Activated CD4-positive, alpha-beta T cell treated with anti-CD3 and anti-CD28 coated beads for 36 hours (primary cell): ENCODE measurements at regions of chr1 and their contacts with region 1.

Region 1: DNA sequence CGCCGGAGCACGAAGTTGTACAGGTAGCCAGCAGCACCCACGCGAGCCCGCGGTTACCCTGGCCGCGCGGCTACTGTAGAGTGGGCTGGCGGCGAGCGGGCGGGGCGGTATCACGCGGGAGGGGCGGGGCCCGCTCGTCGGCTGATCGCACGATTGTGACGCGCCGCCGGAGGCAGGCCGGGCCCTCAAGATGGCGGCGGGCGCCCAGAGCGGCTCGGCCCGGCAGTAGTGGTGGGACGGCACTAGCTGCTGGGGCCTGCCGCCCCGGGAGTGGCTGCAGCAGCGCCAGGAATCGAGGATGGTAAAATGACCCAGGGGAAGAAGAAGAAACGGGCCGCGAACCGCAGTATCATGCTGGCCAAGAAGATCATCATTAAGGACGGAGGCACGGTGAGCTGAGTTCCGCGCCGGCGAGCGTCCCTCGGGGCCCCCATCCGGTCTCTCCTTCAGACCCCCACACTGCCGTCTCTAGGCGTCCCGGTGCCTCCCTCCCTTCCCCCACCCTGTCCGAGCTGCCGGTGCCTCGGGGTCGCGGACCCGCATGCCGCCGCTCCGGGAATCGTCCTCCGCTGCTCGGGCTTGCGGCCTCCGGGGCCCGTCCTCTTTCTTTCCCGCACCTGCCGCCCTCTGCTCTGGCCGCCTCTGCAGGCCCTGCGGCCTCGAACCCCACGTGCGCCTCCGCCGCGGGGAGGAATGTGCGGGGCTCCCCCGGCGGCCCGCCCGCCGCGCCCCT is 68.3 kb downstream of the SLC35A3 start:
- DNase-seq: peak; percentile 95
- ATAC-seq: peak; percentile 80
- H3K4me3 Mint-ChIP-seq: peak overlapping the region; percentile 95
- H3K27ac Mint-ChIP-seq: peak overlapping the region; percentile 98
- H3K4me1 Mint-ChIP-seq: peaks cover 51% of the 10 kb centered on the region
- H3K27me3 Mint-ChIP-seq: no peaks in the 10 kb centered on the region

Region 2: DNA sequence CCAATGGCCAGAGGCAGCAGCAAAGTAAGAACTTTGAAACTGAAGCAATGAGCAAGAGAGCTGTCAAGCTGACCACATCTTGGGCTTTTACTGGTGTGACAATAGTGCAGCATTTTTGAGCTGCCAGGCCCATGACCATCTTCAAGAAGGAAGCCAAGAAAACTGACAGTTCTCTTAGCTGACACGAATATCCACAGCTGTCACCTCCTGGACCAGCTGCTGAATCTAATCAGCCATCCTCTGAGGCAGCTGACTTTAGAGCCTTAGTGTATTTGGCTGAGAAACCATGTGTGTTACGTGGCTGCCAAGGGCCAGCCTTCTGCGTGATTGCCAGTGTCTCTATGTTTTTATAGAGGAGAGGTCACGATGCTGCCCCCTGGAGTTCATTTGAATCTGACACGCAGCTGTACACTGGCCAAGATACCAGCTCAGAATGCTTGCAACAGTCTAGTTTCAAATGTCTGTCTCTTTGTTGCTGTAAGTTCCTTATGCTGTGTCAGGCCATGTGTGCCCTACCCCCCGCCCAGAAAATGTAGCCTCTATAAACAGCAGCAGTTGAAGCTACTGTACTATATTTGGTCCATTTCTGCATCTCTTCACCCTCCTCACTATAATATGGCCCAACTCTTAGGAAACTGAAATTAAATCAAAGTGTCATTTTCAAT is 352.4 kb before region 1 on chr1:
- CTCF ChIA-PET with region 1: no interaction called
- POLR2A ChIA-PET with region 1: no interaction called
- intact Hi-C with region 1: no loop called
- DNase-seq: peak; percentile 67
- ATAC-seq: peak; percentile 73
- H3K4me3 Mint-ChIP-seq: no peak overlapping the region
- H3K27ac Mint-ChIP-seq: no peak overlapping the region
- H3K4me1 Mint-ChIP-seq: no peaks in the 10 kb centered on the region
- H3K27me3 Mint-ChIP-seq: peaks cover 6% of the 10 kb centered on the region

Region 3: GRCh38 chr1:99808391-99809115 is 229.5 kb before region 1 on chr1:
- CTCF ChIA-PET with region 1: interaction called, 3 read pairs
- POLR2A ChIA-PET with region 1: no interaction called
- intact Hi-C with region 1: loop called (anchors 1 kb)
- DNase-seq: peak; percentile 47
- ATAC-seq: peak; percentile 93
- H3K4me3 Mint-ChIP-seq: no peak overlapping the region
- H3K27ac Mint-ChIP-seq: peak overlapping the region; percentile 75
- H3K4me1 Mint-ChIP-seq: peaks cover 11% of the 10 kb centered on the region
- H3K27me3 Mint-ChIP-seq: peaks cover 9% of the 10 kb centered on the region

Region 4: GRCh38 chr1:99969729-99970621 is 68.1 kb before region 1 on chr1 and contains the start of gene SLC35A3:
- CTCF ChIA-PET with region 1: interaction called, 3 read pairs
- POLR2A ChIA-PET with region 1: interaction called, 10 read pairs
- intact Hi-C with region 1: loop called (anchors 1 kb)
- DNase-seq: peak; percentile 89
- ATAC-seq: peak; percentile 89
- H3K4me3 Mint-ChIP-seq: peak within 1 kb of the TSS; percentile 100
- H3K27ac Mint-ChIP-seq: peak within 1 kb of the TSS; percentile 94
- H3K4me1 Mint-ChIP-seq: peaks cover 26% of the 10 kb centered on the region
- H3K27me3 Mint-ChIP-seq: no peaks in the 10 kb centered on the region
- total RNA-seq, gene SLC35A3: 11.2 to 13.4 TPM

Region 5: GRCh38 chr1:100107696-100108095 is 69.6 kb after region 1 on chr1:
- CTCF ChIA-PET with region 1: no interaction called
- POLR2A ChIA-PET with region 1: no interaction called
- intact Hi-C with region 1: no loop called
- DNase-seq: no peak
- ATAC-seq: no peak
- H3K4me3 Mint-ChIP-seq: no peak overlapping the region
- H3K27ac Mint-ChIP-seq: no peak overlapping the region
- H3K4me1 Mint-ChIP-seq: peaks cover 4% of the 10 kb centered on the region
- H3K27me3 Mint-ChIP-seq: no peaks in the 10 kb centered on the region

Region 6: DNA sequence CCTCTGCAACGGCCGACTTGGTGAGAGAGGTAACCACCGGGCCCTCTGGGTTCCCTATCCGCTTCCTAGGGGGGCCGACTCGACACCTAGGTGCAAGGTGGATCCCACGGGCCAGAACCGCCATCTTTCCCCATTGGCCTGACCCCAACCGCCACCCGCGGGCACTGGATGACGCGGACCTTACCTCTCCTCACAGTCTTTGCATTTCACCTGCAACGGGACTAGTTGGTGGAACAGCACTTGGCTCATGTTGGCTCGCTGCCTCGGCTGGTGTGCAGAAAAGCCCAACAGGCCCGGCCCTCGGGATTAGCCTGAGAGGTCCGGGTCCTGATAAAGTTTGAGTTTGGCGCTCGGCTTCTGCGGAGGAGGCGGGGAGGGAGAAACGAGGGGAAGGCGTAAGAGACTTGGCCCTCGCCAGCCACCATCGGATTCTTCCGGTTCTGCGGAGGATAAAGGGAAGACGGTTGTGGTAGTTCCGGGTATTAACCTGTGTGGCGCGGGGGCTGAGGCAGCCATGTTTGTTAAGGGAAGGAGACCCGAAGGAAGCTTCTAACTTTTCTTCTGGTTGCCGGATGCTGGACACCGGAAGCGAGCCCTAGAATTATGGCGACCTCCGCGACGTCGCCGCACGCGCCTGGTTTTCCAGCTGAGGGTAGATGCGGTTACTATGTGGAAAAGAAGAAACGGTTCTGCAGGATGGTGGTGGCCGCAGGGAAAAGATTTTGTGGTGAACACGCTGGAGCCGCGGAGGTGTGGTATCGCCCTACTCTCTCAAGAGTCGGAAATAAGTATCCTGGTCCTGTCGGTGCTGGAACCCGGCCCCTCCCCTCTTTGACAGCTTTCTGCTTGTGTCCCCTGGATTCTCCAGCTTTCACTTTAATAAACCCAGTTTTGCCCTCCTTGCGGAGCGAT is 94.7 kb after region 1 on chr1 and contains the starts of genes SASS6 and TRMT13:
- CTCF ChIA-PET with region 1: no interaction called
- POLR2A ChIA-PET with region 1: interaction called, 5 read pairs
- intact Hi-C with region 1: loop called (anchors 1 kb)
- DNase-seq: peak; percentile 97
- ATAC-seq: peak; percentile 94
- H3K4me3 Mint-ChIP-seq: peak within 1 kb of the TSS; percentile 98
- H3K27ac Mint-ChIP-seq: peak within 1 kb of the TSS; percentile 98
- H3K4me1 Mint-ChIP-seq: peaks cover 32% of the 10 kb centered on the region
- H3K27me3 Mint-ChIP-seq: no peaks in the 10 kb centered on the region
- total RNA-seq, gene SASS6: 14.2 to 17.4 TPM
- total RNA-seq, gene TRMT13: 19.0 to 20.2 TPM

Region 7: DNA sequence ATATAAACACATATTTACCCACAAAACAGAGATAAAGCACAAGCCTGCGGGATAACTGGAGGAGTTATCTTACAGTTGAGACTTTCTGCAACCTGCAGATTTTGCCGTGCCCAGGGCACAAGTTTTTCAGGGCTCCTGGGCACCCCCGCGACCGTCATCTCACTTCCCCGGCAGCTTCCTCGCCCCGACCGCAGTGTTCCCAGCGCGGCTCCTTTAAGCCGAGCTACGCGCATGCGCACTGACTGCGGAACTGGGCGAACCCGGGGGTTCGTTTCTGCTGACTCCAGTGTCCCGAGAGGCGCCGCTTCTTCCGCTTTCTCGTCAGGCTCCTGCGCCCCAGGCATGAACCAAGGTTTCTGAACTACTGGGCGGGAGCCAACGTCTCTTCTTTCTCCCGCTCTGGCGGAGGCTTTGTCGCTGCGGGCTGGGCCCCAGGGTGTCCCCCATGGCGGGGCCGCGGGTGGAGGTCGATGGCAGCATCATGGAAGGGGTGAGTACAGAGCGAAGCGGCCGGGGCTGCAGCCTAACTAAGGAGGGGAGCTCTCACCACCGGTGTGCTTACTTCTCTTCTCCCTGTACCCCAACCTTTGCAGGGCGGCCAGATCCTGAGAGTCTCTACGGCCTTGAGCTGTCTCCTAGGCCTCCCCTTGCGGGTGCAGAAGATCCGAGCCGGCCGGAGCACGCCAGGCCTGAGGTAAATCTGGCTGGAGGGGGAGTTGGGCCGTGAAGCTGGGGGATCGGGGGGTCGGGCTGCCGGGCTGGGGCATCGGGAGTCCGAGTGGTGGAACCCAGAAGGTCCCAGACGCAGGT is 228.0 kb after region 1 on chr1 and contains the start of gene RTCA:
- CTCF ChIA-PET with region 1: interaction called, 4 read pairs
- POLR2A ChIA-PET with region 1: no interaction called
- intact Hi-C with region 1: loop called in 1 of 2 experiments (anchors 1 kb)
- DNase-seq: peak; percentile 97
- ATAC-seq: peak; percentile 93
- H3K4me3 Mint-ChIP-seq: peak within 1 kb of the TSS; percentile 100
- H3K27ac Mint-ChIP-seq: peak within 1 kb of the TSS; percentile 99
- H3K4me1 Mint-ChIP-seq: peaks cover 32% of the 10 kb centered on the region
- H3K27me3 Mint-ChIP-seq: no peaks in the 10 kb centered on the region
- total RNA-seq, gene RTCA: 47.8 to 53.0 TPM

Region 8: DNA sequence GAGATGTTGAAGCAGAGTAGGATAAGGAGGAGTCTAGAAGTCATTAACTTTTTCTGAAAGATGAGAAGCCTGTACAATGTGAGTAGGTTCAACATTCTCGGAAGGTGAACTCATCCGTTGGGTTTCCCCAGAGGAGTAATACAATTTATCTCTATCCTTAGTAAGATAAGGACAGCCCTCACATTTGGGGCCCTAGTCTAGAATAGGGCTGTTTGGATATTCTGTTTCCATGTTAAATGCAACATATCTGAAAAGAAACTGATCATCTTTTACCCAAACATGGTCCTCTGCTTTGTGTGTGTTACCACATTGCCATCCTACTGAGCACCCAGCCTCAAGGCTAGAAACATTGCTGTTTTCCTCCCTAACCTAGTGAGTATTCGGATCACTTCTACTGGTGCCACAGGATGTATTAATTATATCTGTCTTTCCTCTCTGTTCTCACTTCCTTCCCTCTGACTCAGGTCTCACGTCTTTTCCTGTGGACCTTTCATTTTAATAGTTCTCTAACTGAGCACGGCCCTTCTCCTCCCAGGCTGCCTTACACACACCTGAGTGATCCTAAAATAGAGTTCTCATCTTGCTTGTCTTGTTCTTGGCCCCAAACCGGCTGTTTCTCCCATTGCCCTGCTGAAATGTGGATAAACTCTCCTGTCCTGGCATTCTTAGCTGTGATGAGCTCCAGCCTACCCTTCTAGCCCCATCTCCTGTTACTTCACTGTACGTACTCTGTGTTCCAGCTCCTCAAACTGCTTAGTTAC is 405.9 kb after region 1 on chr1:
- CTCF ChIA-PET with region 1: no interaction called
- POLR2A ChIA-PET with region 1: no interaction called
- intact Hi-C with region 1: loop called (anchors 5 kb)
- DNase-seq: peak; percentile 49
- ATAC-seq: peak; percentile 79
- H3K4me3 Mint-ChIP-seq: peak overlapping the region; percentile 68
- H3K27ac Mint-ChIP-seq: peak overlapping the region; percentile 93
- H3K4me1 Mint-ChIP-seq: peaks cover 84% of the 10 kb centered on the region
- H3K27me3 Mint-ChIP-seq: no peaks in the 10 kb centered on the region